ENCODE measurements at regions of chr2 and their contacts with region 1.

Region 1: DNA sequence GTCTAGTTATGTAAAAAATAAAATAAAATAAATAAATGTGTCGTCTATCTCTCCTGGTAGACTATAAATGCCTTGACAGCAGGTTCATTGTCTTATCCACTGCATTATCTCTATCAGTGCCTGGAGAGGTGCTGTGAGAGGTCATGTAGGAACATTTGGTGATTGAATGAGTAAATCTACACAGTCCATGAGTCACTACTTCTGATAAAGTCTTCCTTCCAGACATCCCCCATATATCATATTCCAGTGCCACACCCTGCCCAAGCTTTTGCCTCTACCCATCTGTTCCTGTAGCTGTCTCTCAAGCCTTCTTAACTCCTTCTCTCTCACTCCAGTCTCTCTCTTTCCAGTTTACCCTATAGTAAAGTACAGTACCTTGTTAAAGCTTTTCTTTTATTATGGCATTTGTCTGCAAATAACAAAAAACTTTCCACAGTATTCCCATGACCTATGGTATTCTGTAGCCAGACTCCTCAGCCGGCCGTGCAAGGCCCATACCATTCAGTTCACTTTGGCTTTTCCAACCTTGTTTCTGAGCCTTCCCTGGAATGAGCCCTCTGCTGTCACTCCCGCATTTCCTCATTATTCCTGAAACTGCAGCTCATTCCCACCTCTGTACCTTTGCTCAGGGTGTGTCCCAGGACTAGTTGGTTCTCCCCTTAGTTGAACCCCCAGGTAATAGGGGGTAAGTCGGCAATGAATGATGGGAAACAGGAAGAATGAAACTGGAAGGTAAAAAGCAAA is 37.5 kb downstream of the ANXA4 start:
- DNase-seq: no peak
- H3K4me3 ChIP-seq: no peak overlapping the region
- H3K27ac ChIP-seq: no peak overlapping the region
- H3K4me1 ChIP-seq: no peaks in the 10 kb centered on the region
- CTCF ChIP-seq: no peak

Region 2: DNA sequence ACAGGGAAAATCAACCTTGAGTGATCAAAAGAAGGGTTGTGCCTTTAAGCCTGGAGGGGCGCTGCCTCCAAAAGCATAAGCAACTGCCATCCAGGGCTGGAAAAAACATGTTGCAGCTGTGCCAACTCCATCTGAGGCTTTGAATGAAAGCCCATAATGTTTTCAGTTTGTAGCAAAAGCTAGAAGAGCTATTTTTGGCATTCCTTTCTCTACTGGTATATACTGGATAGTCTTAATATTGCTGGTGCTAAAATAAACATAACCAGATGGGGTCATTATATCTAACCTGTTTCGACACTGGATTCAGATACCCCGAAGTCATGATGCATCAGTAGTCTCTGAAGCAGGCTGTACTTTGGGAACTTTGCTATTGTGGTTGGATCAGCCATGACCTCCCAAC is 12.4 kb before region 1 on chr2:
- CTCF ChIA-PET with region 1: no interaction called
- POLR2A ChIA-PET with region 1: interaction called, 15 read pairs
- intact Hi-C with region 1: no loop called
- DNase-seq: no peak
- H3K4me3 ChIP-seq: no peak overlapping the region
- H3K27ac ChIP-seq: no peak overlapping the region
- H3K4me1 ChIP-seq: no peaks in the 10 kb centered on the region
- CTCF ChIP-seq: no peak

Measured in OCI-LY7 (cell line).